Right ventricle myocardium superior (tissue), 1 donor: ENCODE measurements at regions of chr22 and their contacts with region 1.

Region 1: DNA sequence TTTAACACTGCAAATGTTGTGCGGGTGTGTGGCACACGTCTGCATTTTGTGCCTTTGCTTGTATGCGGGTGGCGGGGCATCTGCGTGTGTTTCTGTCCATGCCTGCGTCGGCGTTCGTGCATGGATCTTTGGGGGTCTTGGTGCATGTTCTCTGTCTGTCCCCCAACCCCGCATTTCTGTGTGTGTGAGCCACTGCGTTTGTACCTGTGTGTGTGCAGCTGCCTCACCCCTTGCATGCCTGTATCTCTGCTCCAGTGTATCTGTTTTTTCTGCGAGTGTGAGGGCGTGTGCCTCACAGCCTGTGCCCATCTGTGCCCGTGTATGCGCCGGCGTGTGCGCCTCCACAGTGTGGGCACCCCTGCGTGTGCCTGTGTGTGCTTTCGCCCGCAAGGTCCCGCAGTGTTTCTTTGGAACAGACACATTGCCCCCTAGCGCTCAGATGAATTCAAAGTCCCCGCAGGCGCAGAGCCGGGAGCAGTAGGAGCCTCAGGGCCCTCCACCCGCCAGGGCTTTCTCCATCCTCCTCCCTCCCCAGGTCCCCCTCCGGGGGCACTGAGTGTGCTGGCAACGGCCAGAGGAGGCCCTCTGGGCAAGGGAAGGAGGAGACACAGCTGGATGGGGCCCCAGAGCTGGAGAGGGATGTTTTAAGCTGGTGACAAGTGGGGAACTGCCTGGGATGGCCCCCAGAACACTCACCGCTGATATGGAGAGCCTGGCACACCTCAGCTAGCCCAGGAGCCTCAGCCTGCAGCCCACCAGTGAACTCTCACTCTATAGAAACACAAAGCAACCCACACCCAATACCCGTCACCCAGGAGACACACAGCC is 3.1 kb upstream of the MN1 start:
- DNase-seq: peak; percentile 80
- ATAC-seq: peak; percentile 61

Region 2: GRCh38 chr22:26756675-26757293 is 1047.9 kb before region 1 on chr22:
- intact Hi-C with region 1: loop called (anchors 10 kb)
- DNase-seq: peak; percentile 78
- ATAC-seq: peak; percentile 89

Region 3: GRCh38 chr22:27405672-27406388 is 398.9 kb before region 1 on chr22:
- intact Hi-C with region 1: loop called (anchors 5 kb)
- DNase-seq: peak; percentile 73
- ATAC-seq: peak; percentile 87

Region 4: DNA sequence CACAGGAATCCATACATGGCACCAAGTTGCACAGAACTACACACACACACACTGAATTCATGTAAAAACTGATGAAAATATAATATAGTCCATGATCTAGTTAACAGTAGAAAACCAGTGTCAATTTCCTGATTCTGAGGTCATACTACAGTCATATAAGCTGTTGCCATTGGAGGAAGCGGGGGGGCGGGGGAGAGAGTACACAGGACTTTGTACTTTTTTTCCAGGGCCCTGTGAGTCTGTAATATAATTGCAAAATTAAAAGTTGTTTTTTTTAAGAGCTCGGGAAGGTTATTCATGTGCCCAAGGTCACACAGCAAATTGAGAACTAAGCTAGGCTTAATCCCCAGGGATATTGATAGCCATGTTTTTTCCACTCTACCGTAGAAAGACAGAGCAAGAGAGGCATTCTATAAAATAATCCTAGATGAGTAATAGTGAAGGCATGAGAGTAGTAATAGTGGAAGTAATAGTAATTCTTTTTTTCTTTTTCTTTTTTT is 315.5 kb before region 1 on chr22:
- intact Hi-C with region 1: loop called (anchors 5 kb)
- DNase-seq: no peak
- ATAC-seq: no peak